ENCODE measurements at regions of chr17 and their contacts with region 1.

Region 1: DNA sequence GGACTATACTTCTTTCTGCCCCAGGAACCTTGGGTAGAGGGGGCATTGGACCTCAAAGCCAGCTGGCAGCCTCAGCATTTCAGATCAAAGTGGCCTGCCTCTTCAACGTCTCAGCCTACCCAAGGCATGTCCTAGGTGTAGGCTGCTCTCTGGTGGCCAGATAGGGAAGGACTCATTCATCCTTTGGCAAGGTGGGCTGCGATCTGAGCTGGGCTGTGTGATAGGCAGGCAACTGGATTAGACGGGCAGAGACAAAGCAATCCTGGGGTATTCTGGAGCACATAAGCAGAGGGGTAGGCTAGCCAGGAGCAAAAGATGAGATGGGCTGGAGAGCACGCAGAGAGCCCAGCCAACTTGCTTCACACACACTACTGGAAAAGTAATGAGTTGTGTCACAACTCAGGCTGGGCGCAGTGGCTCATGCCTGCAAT is 8.8 kb upstream of the NAGLU start:
- DNase-seq: peak; percentile 89
- ATAC-seq: peak; percentile 83
- H3K4me3 Mint-ChIP-seq: no peak overlapping the region
- H3K27ac Mint-ChIP-seq: no peak overlapping the region
- H3K4me1 Mint-ChIP-seq: peaks cover 40% of the 10 kb centered on the region
- H3K27me3 Mint-ChIP-seq: no peaks in the 10 kb centered on the region
- CTCF ChIP-seq: peak; percentile 84

Region 2: GRCh38 chr17:42322382-42323267 is 204.7 kb before region 1 on chr17:
- CTCF ChIA-PET with region 1: interaction called, 6 read pairs
- POLR2A ChIA-PET with region 1: no interaction called
- intact Hi-C with region 1: loop called (anchors 5 kb)
- DNase-seq: peak; percentile 99
- ATAC-seq: peak; percentile 89
- H3K4me3 Mint-ChIP-seq: no peak overlapping the region
- H3K27ac Mint-ChIP-seq: peak overlapping the region; percentile 85
- H3K4me1 Mint-ChIP-seq: peaks cover 52% of the 10 kb centered on the region
- H3K27me3 Mint-ChIP-seq: no peaks in the 10 kb centered on the region
- CTCF ChIP-seq: peak; percentile 100

Region 3: DNA sequence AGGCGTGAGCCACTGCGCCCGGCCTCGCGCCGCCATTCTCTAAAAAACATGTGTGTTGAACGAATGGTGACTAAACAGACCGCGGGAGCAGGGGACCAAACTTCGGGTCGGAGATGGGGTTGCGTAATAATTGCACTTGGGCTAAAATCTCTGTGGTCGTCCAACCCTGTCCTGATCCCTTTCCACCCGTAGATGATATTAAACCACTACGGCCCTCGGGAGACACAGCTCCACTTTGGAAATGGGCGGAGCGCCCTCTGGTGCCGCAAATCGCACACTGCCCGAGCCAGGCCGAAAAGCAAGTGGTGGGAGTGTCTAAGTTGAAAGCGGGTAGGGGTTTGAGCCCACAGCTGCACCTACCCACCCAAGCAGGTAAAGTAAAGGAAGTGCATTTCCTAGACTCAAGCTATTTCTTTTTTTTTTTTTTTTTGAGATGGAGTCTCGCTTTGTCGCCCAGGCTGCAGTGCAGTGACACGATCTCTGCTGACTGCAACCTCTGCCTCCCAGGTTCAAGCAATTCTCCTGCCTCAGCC is 121.3 kb before region 1 on chr17:
- CTCF ChIA-PET with region 1: interaction called, 14 read pairs
- POLR2A ChIA-PET with region 1: no interaction called
- intact Hi-C with region 1: no loop called
- DNase-seq: peak; percentile 89
- ATAC-seq: peak; percentile 77
- H3K4me3 Mint-ChIP-seq: no peak overlapping the region
- H3K27ac Mint-ChIP-seq: no peak overlapping the region
- H3K4me1 Mint-ChIP-seq: peaks cover 24% of the 10 kb centered on the region
- H3K27me3 Mint-ChIP-seq: no peaks in the 10 kb centered on the region
- CTCF ChIP-seq: peak; percentile 94

Region 4: DNA sequence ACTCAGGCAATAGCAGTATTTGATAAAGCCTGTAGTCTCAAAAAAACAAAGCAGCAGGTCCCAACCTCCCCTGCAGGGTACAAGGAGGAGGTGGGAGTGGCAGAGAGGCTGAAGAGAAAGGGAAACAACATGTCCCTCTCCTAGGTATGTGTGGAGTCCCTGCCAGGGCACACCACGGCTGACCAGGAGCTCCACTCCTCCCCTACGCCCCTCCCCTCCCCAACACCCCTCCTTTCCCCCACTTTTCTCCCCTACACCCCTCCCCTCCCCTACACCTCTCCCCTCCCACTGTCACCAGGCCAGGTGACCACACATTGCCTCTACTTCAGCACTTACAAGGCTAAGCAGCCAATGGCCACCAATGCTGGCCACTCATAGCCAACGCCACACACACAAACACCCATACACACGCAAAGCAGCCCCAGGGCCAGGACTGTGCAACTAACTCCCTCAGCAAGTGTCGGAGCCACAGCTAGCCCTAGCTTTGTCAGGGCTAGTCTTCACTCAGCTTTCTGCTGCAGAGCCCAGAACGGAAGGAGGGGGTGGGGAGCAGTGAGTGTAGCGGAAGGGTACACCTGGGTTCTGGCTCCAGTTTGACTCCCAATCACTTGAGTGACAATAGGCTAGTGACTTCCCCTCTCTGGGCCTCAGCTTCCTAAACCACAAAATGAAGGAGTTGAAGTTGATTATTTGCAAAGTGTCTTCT is 112.4 kb before region 1 on chr17:
- CTCF ChIA-PET with region 1: interaction called, 37 read pairs
- POLR2A ChIA-PET with region 1: no interaction called
- intact Hi-C with region 1: no loop called
- DNase-seq: peak; percentile 77
- ATAC-seq: peak; percentile 84
- H3K4me3 Mint-ChIP-seq: peak overlapping the region; percentile 50
- H3K27ac Mint-ChIP-seq: peak overlapping the region; percentile 74
- H3K4me1 Mint-ChIP-seq: peaks cover 18% of the 10 kb centered on the region
- H3K27me3 Mint-ChIP-seq: no peaks in the 10 kb centered on the region
- CTCF ChIP-seq: no peak

Region 5: GRCh38 chr17:42422958-42423712 is 104.2 kb before region 1 on chr17 and contains the start of gene CAVIN1:
- CTCF ChIA-PET with region 1: interaction called, 37 read pairs
- POLR2A ChIA-PET with region 1: interaction called, 3 read pairs
- intact Hi-C with region 1: no loop called
- DNase-seq: peak; percentile 34
- ATAC-seq: peak; percentile 26
- H3K4me3 Mint-ChIP-seq: peak within 1 kb of the TSS; percentile 70
- H3K27ac Mint-ChIP-seq: no peak within 1 kb of the TSS
- H3K4me1 Mint-ChIP-seq: peaks cover 19% of the 10 kb centered on the region
- H3K27me3 Mint-ChIP-seq: peaks cover 35% of the 10 kb centered on the region
- CTCF ChIP-seq: no peak
- total RNA-seq, gene CAVIN1: 1.8 to 2.0 TPM

Region 6: DNA sequence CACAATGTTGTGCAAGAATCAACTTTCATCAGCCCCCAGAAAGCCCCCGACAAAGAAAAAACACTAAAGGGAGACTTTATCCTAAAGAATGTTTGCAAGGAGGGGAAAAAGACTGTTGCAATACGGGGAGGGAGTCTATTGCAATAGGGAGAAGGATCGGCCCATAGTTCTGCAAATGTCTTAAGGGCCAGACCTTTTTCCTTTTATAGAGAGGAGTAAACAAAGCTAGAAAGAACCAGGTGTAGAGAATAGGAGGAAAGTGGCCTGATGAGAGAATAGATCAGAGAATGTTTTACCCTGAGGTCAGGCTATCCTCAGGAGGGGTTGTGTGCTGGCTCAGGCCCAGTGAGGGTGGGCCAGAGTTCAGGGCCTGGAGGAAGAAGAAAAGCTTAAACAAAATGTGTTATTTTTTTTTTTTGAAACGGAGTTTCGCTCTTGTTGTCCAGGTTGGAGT is 95.5 kb before region 1 on chr17:
- CTCF ChIA-PET with region 1: interaction called, 13 read pairs
- POLR2A ChIA-PET with region 1: no interaction called
- intact Hi-C with region 1: no loop called
- DNase-seq: no peak
- ATAC-seq: no peak
- H3K4me3 Mint-ChIP-seq: no peak overlapping the region
- H3K27ac Mint-ChIP-seq: no peak overlapping the region
- H3K4me1 Mint-ChIP-seq: no peaks in the 10 kb centered on the region
- H3K27me3 Mint-ChIP-seq: peaks cover 2% of the 10 kb centered on the region
- CTCF ChIP-seq: no peak

Region 7: GRCh38 chr17:42438600-42439567 is 88.4 kb before region 1 on chr17:
- CTCF ChIA-PET with region 1: interaction called, 10 read pairs
- POLR2A ChIA-PET with region 1: no interaction called
- intact Hi-C with region 1: no loop called
- DNase-seq: peak; percentile 77
- ATAC-seq: peak; percentile 42
- H3K4me3 Mint-ChIP-seq: no peak overlapping the region
- H3K27ac Mint-ChIP-seq: no peak overlapping the region
- H3K4me1 Mint-ChIP-seq: peaks cover 7% of the 10 kb centered on the region
- H3K27me3 Mint-ChIP-seq: peaks cover 4% of the 10 kb centered on the region
- CTCF ChIP-seq: peak; percentile 62

Region 8: GRCh38 chr17:42577532-42578281 is 50.4 kb after region 1 on chr17 and contains the start of gene PSMC3IP:
- CTCF ChIA-PET with region 1: no interaction called
- POLR2A ChIA-PET with region 1: no interaction called
- intact Hi-C with region 1: no loop called
- DNase-seq: peak; percentile 98
- ATAC-seq: peak; percentile 95
- H3K4me3 Mint-ChIP-seq: peak within 1 kb of the TSS; percentile 88
- H3K27ac Mint-ChIP-seq: peak within 1 kb of the TSS; percentile 97
- H3K4me1 Mint-ChIP-seq: peaks cover 35% of the 10 kb centered on the region
- H3K27me3 Mint-ChIP-seq: no peaks in the 10 kb centered on the region
- CTCF ChIP-seq: no peak
- total RNA-seq, gene PSMC3IP: 18.1 to 21.4 TPM

Region 9: DNA sequence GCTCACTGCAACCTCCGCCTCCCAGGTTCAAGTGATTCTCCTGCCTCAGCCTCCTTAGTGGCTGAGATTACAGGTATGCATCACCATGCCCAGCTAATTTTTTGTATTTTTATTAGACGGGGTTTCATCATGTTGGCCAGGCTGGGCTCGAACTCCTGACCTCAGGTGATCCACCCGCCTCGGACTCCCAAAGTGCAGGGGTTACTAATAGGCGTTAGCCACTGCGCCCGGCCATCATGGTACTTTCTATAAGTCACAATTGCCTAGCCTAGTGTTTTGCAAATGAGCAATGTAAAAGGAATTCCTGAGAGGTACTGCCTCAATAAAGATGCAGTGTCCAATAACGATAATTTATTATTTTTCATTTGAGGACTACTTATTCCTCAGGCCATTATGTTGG is 64.1 kb after region 1 on chr17:
- CTCF ChIA-PET with region 1: no interaction called
- POLR2A ChIA-PET with region 1: no interaction called
- intact Hi-C with region 1: no loop called
- DNase-seq: no peak
- ATAC-seq: no peak
- H3K4me3 Mint-ChIP-seq: no peak overlapping the region
- H3K27ac Mint-ChIP-seq: no peak overlapping the region
- H3K4me1 Mint-ChIP-seq: peaks cover 4% of the 10 kb centered on the region
- H3K27me3 Mint-ChIP-seq: no peaks in the 10 kb centered on the region
- CTCF ChIP-seq: no peak

Measured in activated CD8-positive, alpha-beta T cell treated with anti-CD3 and anti-CD28 coated beads for 36 hours (primary cell).